Activated CD4-positive, alpha-beta memory T cell treated with anti-CD3 and anti-CD28 coated beads for 36 hours (primary cell): ENCODE measurements at regions of chr6 and their contacts with region 1.

Region 1: DNA sequence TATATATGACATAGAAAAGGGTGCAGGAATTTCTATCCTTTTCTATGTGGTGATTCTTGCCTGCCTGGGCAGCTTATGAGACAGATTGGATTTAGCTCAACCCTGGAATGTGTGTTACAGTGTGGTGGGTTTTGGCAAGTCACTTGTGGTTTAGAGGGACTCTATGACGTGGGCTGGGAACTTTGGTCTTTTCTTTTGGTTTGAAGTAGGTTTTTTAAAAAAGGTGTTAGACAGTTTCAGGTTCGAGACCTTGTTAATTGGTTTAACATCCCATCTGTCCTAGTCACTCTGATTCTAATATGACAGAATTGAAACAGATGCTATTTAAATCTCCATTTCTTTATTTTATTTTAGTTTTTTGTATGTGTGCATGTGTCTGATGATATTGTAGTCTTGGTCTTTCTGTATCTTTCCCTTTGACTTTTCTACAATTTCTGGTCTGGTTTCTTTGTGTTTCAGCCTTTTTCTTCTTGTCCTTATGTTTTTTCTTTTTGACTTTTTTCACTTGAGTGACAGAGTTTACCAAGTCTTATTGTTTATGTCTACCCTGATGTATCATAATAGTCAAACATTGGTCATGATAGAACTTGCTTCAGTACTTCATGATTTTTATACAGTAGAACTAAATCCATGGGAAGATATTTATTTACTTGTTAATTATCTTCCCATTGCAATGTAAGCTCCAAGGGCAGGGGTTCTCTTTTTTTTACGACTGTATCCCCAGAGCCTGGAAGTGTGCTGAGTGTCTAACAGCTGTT is 174.3 kb downstream of the CDKAL1 start:
- DNase-seq: peak; percentile 41
- H3K4me3 Mint-ChIP-seq: no peak overlapping the region
- H3K27ac Mint-ChIP-seq: no peak overlapping the region
- H3K4me1 Mint-ChIP-seq: peaks cover 52% of the 10 kb centered on the region
- H3K27me3 Mint-ChIP-seq: no peaks in the 10 kb centered on the region

Region 2: GRCh38 chr6:20582586-20583446 is 125.7 kb before region 1 on chr6:
- CTCF ChIA-PET with region 1: no interaction called
- POLR2A ChIA-PET with region 1: no interaction called
- intact Hi-C with region 1: loop called (anchors 5 kb)
- DNase-seq: no peak
- H3K4me3 Mint-ChIP-seq: no peak overlapping the region
- H3K27ac Mint-ChIP-seq: no peak overlapping the region
- H3K4me1 Mint-ChIP-seq: peaks cover 28% of the 10 kb centered on the region
- H3K27me3 Mint-ChIP-seq: no peaks in the 10 kb centered on the region

Region 3: GRCh38 chr6:20599302-20600051 is 109.1 kb before region 1 on chr6:
- CTCF ChIA-PET with region 1: no interaction called
- POLR2A ChIA-PET with region 1: no interaction called
- intact Hi-C with region 1: loop called (anchors 5 kb)
- DNase-seq: no peak
- H3K4me3 Mint-ChIP-seq: no peak overlapping the region
- H3K27ac Mint-ChIP-seq: no peak overlapping the region
- H3K4me1 Mint-ChIP-seq: peaks cover 11% of the 10 kb centered on the region
- H3K27me3 Mint-ChIP-seq: no peaks in the 10 kb centered on the region

Region 4: GRCh38 chr6:20688710-20689500 is 19.6 kb before region 1 on chr6:
- CTCF ChIA-PET with region 1: no interaction called
- POLR2A ChIA-PET with region 1: no interaction called
- intact Hi-C with region 1: no loop called
- DNase-seq: no peak
- H3K4me3 Mint-ChIP-seq: peak overlapping the region; percentile 8
- H3K27ac Mint-ChIP-seq: no peak overlapping the region
- H3K4me1 Mint-ChIP-seq: peaks cover 35% of the 10 kb centered on the region
- H3K27me3 Mint-ChIP-seq: no peaks in the 10 kb centered on the region

Region 5: DNA sequence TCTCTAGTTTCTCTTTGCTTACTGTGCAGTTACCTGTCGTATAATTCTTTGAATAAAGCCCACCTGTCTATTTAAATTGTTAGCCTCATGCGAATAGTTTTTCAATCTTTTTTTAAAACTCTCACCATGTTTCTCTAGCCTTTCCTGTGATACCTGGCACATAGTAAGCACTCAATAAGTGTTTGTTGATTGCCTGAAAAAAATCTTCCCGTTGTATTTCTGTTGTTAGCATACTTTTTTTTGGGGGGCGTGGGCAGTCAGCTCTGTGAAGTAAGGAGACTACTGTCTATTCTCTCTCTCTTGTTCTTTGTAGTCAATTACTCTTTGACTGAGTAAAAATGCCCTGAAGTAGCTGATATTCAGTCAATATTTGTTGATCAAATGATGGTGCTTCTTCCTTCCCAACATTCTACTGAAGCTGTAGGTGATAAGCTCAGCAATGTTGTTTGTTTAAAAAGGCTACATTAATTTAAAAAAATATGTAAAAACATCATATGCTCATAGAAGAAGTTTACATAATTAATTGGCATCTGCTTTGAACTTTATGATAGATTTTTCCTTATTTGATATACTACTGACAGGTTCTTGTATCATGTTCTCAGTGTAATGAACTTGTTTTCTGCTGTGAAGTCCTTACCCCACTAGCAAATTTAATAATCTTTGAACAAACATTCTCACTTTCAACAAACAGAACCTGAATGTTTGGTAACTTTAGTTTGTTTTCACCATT is 31.7 kb after region 1 on chr6:
- CTCF ChIA-PET with region 1: no interaction called
- POLR2A ChIA-PET with region 1: no interaction called
- intact Hi-C with region 1: no loop called
- DNase-seq: no peak
- H3K4me3 Mint-ChIP-seq: no peak overlapping the region
- H3K27ac Mint-ChIP-seq: no peak overlapping the region
- H3K4me1 Mint-ChIP-seq: no peaks in the 10 kb centered on the region
- H3K27me3 Mint-ChIP-seq: no peaks in the 10 kb centered on the region

Region 6: GRCh38 chr6:20826378-20826777 is 117.8 kb after region 1 on chr6:
- CTCF ChIA-PET with region 1: no interaction called
- POLR2A ChIA-PET with region 1: no interaction called
- intact Hi-C with region 1: no loop called
- DNase-seq: no peak
- H3K4me3 Mint-ChIP-seq: no peak overlapping the region
- H3K27ac Mint-ChIP-seq: no peak overlapping the region
- H3K4me1 Mint-ChIP-seq: no peaks in the 10 kb centered on the region
- H3K27me3 Mint-ChIP-seq: no peaks in the 10 kb centered on the region

Region 7: DNA sequence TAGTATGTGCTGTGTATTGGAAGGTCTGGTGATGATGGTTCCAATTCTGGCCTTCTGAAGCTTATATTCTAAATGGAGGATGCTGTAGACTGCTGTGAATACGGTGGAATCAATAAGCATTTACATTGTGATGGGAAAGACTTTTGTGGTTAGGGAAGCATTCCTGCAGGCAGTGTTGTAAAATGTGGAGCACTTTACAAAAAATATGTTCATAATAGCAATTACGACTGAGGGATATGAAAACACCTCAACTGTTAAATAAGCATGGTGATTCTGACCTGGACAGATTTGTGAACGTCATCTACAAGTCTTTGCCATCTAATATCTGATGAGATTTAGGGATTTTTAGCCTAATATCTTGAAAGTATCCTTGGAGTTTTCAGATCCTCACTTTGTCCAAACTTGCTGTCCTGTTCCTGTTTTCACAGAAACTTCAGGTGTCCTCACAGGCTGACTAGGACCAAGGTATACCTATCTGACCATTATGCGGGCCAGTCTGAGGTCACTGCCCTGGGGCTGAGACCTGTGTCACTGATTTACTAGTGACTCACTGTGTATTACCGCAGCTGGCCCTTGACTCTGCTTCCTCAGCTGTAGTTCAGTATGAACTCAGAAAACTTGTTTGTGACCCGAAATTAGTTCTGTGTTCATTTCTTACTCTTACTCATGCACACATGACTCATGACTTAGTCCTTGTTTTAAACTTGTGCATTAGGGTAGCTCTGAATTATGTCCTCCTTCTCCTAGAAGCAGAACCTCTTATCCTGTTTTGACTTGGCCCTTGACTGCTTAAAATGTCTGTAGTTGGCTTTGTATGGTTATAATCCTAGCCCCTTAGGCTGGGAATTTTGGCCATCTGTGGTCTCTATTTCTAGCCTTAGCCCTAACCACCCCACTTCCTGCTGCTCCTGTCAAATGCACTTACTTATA is 168.7 kb after region 1 on chr6:
- CTCF ChIA-PET with region 1: no interaction called
- POLR2A ChIA-PET with region 1: no interaction called
- intact Hi-C with region 1: loop called (anchors 5 kb)
- DNase-seq: peak; percentile 65
- H3K4me3 Mint-ChIP-seq: no peak overlapping the region
- H3K27ac Mint-ChIP-seq: peak overlapping the region; percentile 65
- H3K4me1 Mint-ChIP-seq: peaks cover 18% of the 10 kb centered on the region
- H3K27me3 Mint-ChIP-seq: no peaks in the 10 kb centered on the region

Region 8: GRCh38 chr6:21263531-21264287 is 555.2 kb after region 1 on chr6:
- CTCF ChIA-PET with region 1: no interaction called
- POLR2A ChIA-PET with region 1: no interaction called
- intact Hi-C with region 1: loop called (anchors 10 kb)
- DNase-seq: peak; percentile 34
- H3K4me3 Mint-ChIP-seq: no peak overlapping the region
- H3K27ac Mint-ChIP-seq: no peak overlapping the region
- H3K4me1 Mint-ChIP-seq: peaks cover 22% of the 10 kb centered on the region
- H3K27me3 Mint-ChIP-seq: peaks cover 5% of the 10 kb centered on the region